MCF 10A (cell line): ENCODE measurements at regions of chr11 and their contacts with region 1.

Region 1: GRCh38 chr11:32792948-32793475 is 1.4 kb downstream of the CCDC73 start:
- DNase-seq: peak; percentile 66
- H3K4me3 Mint-ChIP-seq: no peak overlapping the region
- H3K27ac Mint-ChIP-seq: no peak overlapping the region
- H3K4me1 Mint-ChIP-seq: peaks cover 5% of the 10 kb centered on the region
- H3K27me3 Mint-ChIP-seq: no peaks in the 10 kb centered on the region
- CTCF ChIP-seq: peak; percentile 62

Region 2: GRCh38 chr11:32323814-32324130 is 469.2 kb before region 1 on chr11:
- CTCF ChIA-PET with region 1: interaction called, 44 read pairs
- POLR2A ChIA-PET with region 1: no interaction called
- intact Hi-C with region 1: loop called (anchors 1 kb)
- DNase-seq: no peak
- H3K4me3 Mint-ChIP-seq: no peak overlapping the region
- H3K27ac Mint-ChIP-seq: no peak overlapping the region
- H3K4me1 Mint-ChIP-seq: no peaks in the 10 kb centered on the region
- H3K27me3 Mint-ChIP-seq: peaks cover 38% of the 10 kb centered on the region
- CTCF ChIP-seq: no peak

Region 3: DNA sequence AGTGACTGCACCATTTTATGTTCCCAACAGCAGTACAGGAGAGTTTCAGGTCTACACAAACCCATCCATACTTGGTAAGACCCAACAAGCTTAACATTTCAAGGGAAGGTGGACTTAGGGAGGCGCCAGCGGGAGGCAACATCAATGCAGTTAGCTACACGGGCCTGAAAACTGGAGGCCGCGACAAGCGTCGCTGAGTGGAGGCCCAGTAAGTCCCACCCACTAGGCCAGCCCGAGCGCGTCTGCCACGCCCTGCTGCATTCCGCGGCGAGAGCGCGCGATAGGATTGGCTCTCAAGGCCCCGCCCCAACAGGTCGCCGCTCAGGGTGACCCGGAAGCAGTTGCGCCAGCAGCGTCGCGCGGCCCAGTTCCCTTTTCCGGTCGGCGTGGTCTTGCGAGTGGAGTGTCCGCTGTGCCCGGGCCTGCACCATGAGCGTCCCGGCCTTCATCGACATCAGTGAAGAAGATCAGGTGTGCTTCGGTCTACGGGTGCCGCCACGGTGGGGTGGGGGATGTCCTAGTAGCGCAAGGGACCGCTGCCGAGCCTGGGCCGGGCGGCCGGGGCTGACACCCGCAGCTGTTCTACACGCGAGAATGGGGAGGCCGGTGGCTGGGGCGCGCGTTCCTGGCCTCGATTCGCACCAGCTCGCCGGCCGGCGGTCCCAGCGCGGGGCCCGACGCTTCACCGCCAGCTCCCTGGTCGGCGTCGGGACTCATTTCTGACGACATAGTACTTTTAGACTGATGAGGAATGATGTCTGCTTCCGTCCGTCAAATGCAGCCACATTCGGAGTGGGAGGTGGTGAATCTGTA is 209.3 kb before region 1 on chr11 and contains the start of gene EIF3M:
- CTCF ChIA-PET with region 1: interaction called, 3 read pairs
- POLR2A ChIA-PET with region 1: interaction called, 3 read pairs
- intact Hi-C with region 1: loop called (anchors 5 kb)
- DNase-seq: peak; percentile 96
- H3K4me3 Mint-ChIP-seq: peak within 1 kb of the TSS; percentile 96
- H3K27ac Mint-ChIP-seq: peak within 1 kb of the TSS; percentile 98
- H3K4me1 Mint-ChIP-seq: peaks cover 18% of the 10 kb centered on the region
- H3K27me3 Mint-ChIP-seq: no peaks in the 10 kb centered on the region
- CTCF ChIP-seq: no peak
- total RNA-seq, gene EIF3M: 356 and 443 TPM in 2 replicates

Region 4: GRCh38 chr11:32630844-32631243 is 162.2 kb before region 1 on chr11:
- CTCF ChIA-PET with region 1: no interaction called
- POLR2A ChIA-PET with region 1: no interaction called
- intact Hi-C with region 1: no loop called
- DNase-seq: no peak
- H3K4me3 Mint-ChIP-seq: no peak overlapping the region
- H3K27ac Mint-ChIP-seq: no peak overlapping the region
- H3K4me1 Mint-ChIP-seq: no peaks in the 10 kb centered on the region
- H3K27me3 Mint-ChIP-seq: no peaks in the 10 kb centered on the region
- CTCF ChIP-seq: no peak

Region 5: DNA sequence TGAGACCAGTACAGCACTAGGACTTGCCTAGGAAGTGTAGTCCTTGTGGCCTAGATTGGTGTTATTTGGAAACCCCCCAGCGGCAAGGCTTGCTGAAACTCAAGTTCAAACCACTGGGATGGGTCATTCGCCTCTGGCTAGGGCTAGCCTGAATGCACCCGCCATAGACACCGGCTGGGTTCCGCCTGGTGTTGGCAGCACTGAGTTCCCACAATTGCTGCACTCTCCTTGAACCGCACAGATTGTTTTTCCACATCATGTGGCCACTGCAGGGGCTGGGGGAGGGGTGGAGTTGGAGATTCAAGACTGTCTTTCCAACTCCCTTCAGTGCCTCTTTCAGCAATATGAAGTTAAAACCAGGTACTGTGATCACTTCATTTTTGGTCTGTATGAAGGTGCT is 41.6 kb before region 1 on chr11:
- CTCF ChIA-PET with region 1: interaction called, 11 read pairs
- POLR2A ChIA-PET with region 1: interaction called, 3 read pairs
- intact Hi-C with region 1: loop called (anchors 5 kb)
- DNase-seq: no peak
- H3K4me3 Mint-ChIP-seq: no peak overlapping the region
- H3K27ac Mint-ChIP-seq: no peak overlapping the region
- H3K4me1 Mint-ChIP-seq: no peaks in the 10 kb centered on the region
- H3K27me3 Mint-ChIP-seq: peaks cover 20% of the 10 kb centered on the region
- CTCF ChIP-seq: no peak

Region 6: GRCh38 chr11:32809313-32809712 is 16.3 kb after region 1 on chr11:
- CTCF ChIA-PET with region 1: interaction called, 12 read pairs
- POLR2A ChIA-PET with region 1: no interaction called
- intact Hi-C with region 1: no loop called
- DNase-seq: peak; percentile 82
- H3K4me3 Mint-ChIP-seq: no peak overlapping the region
- H3K27ac Mint-ChIP-seq: no peak overlapping the region
- H3K4me1 Mint-ChIP-seq: no peaks in the 10 kb centered on the region
- H3K27me3 Mint-ChIP-seq: no peaks in the 10 kb centered on the region
- CTCF ChIP-seq: peak; percentile 83